Left cardiac atrium (tissue), 4 donors: ENCODE measurements at regions of chr11 and their contacts with region 1.

Region 1: DNA sequence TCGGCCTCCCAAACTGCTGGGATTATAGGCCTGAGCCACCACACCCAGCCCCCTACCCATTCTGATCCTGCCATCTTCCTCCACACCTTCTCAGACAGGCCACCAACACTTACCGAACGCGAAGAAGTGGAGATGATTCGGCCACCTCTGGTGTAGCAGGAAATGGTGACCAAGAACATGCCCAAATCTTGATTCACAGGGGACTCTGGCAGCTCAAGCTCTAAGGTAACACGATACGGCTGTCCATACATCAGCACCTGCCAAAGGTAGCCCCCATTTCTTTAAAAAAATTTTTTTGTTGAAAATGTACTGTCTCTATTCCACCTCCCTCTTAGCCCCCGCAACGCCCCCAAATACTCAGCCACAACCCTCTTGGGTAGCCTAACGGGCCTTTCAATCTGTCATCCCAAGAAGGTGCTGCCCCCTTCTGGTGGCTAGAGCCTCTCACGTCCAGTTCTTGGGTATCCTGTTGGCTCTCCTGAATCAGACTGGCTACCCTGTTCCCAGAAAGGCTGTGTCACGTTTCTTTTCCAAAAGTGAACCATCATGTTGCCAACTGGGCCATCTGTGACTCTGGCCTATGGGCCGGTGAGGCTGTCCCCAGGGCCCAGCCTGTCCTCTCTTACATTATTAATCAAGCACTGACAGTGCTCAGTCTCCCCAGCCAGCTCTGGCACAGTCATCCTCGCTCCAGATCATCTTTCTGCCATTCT is 5.3 kb upstream of the LRRN4CL start:
- DNase-seq: peak; percentile 86
- ATAC-seq: peak; percentile 80 to 81

Region 2: DNA sequence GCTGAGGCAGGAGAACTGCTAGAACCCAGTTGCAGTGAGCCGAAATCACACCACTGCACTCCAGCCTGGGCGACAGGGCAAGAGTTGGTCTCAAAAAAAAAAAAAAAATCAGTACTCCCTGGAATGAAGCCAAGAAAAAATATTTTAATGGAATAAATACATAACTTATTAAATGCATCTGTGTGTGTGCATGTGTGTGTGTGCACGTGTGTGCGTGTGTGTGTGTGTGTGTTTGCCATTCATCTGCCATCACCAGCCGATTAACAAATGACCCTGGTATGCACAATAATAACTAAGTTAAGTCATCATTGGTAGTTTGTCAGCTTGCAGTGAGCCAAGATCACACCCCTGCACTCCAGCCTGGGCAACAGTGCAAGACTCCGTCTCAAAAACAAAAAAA is 310.8 kb before region 1 on chr11:
- intact Hi-C with region 1: loop called in 1 of 2 experiments (anchors 10 kb)
- DNase-seq: no peak
- ATAC-seq: no peak

Region 3: DNA sequence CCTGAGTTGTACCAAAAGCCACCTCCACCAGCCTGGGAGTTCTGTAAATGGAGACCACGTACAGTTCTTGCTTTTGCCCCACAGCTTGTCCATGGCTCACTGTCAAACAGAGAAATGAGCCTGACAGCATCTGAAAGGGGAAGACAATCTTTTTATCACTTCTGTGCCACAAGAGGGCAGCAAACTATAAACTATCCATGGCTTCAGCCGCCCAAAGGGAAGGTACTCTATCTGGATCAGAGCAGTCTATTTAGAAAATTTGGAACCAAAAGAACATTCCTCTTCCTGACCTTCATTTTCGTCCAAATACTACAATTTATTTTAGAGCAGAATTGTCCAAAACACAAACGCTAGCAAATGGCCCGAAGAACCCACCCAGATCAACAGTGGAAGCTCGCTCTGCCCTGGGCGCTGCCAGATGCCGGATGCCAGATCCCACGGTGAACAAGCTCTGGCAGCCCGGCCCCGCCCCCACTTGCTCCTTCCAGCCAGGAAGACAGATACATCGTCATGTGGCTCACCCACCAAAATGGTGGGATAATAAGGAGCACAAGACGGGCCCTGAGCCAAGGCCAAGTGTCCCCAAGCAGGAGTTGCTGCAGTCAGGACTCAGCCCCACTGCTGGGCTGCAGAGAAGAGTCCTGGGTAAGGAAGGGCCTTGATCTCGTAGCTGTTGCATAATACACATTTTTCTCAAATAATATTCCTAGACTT is 299.6 kb before region 1 on chr11:
- intact Hi-C with region 1: loop called in 1 of 2 experiments (anchors 10 kb)
- DNase-seq: peak; percentile 88
- ATAC-seq: peak; percentile 75 to 80